BJ (cell line): ENCODE measurements at regions of chr5 and their contacts with region 1.

Region 1: GRCh38 chr5:55159763-55160492 is at the start of gene GPX8:
- DNase-seq: peak; percentile 59
- H3K4me3 ChIP-seq: peak within 1 kb of the TSS; percentile 67
- H3K27me3 ChIP-seq: no peaks in the 10 kb centered on the region
- CTCF ChIP-seq: peak; percentile 57
- polyA plus RNA-seq, gene GPX8: 115 and 271 TPM in 2 replicates

Region 2: GRCh38 chr5:54895816-54896341 is 264.0 kb before region 1 on chr5:
- CTCF ChIA-PET with region 1: interaction called, 59 read pairs
- POLR2A ChIA-PET with region 1: interaction called, 3 read pairs
- DNase-seq: no peak
- H3K4me3 ChIP-seq: no peak overlapping the region
- H3K27me3 ChIP-seq: peaks cover 2% of the 10 kb centered on the region; the same call in 1 of the 2 replicates
- CTCF ChIP-seq: peak; percentile 72

Region 3: DNA sequence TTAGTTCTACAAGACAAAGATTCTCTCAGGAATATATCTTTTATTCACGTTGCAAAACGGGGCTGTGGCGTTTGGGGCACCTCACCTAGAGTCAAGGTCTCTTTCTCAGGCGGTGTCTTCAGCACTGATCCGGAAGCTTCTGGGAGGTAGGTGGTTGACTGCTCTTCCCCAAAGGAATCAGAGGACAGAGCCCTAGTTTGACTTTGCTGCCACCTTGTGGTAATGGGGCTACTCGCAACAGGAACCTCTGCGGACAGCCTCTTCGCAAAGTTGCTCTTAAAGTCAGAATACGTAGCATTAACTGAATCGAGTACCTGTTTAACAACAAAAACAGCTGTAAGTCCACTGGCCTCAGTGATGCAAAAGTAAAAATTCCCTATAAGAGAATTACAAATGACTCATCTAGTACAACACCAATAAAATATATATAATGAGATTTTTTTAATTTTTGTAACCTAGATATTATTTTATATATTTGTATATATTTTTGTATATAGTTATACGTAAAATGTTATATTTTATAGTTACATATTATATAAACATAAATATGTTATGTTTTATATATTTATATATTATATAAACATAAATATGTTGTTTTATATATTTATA is 13.3 kb before region 1 on chr5:
- CTCF ChIA-PET with region 1: interaction called, 11 read pairs
- POLR2A ChIA-PET with region 1: no interaction called
- DNase-seq: peak; percentile 35
- H3K4me3 ChIP-seq: no peak overlapping the region
- H3K27me3 ChIP-seq: no peaks in the 10 kb centered on the region
- CTCF ChIP-seq: peak; percentile 91

Region 4: GRCh38 chr5:55172051-55172899 is 12.3 kb after region 1 on chr5:
- CTCF ChIA-PET with region 1: interaction called, 17 read pairs
- POLR2A ChIA-PET with region 1: no interaction called
- DNase-seq: no peak
- H3K4me3 ChIP-seq: peak overlapping the region; percentile 40
- H3K27me3 ChIP-seq: peaks cover 21% of the 10 kb centered on the region
- CTCF ChIP-seq: peak; percentile 77